B cell (primary cell): ENCODE measurements at regions of chr22 and their contacts with region 1.

Region 1: DNA sequence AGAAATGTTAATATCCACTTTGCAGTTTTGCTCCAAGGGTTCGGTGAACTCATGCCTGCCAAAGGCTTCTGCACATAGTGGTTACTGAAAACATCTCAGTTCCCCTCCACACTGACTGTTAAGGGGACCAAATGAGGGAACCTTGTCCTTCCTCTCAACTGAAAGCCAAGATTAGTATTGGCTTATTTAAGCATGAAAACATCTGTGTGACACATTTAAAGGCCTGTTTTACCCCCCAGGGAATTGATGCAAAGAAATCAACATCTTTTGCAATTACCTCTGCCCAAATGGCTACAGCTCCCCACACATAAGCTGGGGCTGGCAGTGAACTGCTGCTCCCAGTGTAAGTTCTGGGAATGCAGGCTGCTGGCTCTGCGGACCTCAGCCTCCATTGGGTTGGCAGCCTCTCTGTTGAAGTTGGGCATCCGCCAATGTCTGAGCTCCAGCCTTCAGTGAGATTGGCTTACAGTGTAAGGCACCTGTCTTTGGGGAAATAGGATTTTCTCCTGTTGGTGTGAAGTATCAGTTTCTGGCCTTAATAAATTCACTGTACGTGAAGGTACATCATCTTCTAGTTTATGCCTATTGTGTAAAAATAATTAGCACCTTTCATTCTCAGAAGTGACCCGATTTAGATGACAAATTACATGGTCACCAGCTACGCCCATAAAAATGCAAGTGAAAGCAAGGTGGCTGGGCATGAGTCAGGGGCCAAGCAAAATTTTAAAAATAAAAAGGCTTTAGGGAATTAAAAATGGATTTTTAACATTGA is 213.4 kb upstream of the SYN3 start:
- DNase-seq: peak; percentile 86
- ATAC-seq: peak; percentile 89
- H3K4me3 ChIP-seq: peak overlapping the region in 1 of 5 experiments; percentile 28
- H3K4me3 Mint-ChIP-seq: peak overlapping the region; percentile 74
- H3K27ac ChIP-seq: peak overlapping the region; percentile 84 to 91
- H3K27ac Mint-ChIP-seq: peak overlapping the region; percentile 88
- H3K4me1 ChIP-seq: peaks cover 74 to 79% of the 10 kb centered on the region in 2 donors
- H3K4me1 Mint-ChIP-seq: peaks cover 75% of the 10 kb centered on the region
- H3K27me3 ChIP-seq: no peaks in the 10 kb centered on the region
- H3K27me3 Mint-ChIP-seq: no peaks in the 10 kb centered on the region
- CTCF ChIP-seq: no peak

Region 2: GRCh38 chr22:33139937-33140336 is 131.6 kb before region 1 on chr22:
- CTCF ChIA-PET with region 1: no interaction called
- POLR2A ChIA-PET with region 1: no interaction called
- intact Hi-C with region 1: no loop called
- DNase-seq: no peak
- ATAC-seq: no peak
- H3K4me3 ChIP-seq: no peak overlapping the region
- H3K4me3 Mint-ChIP-seq: no peak overlapping the region
- H3K27ac ChIP-seq: no peak overlapping the region
- H3K27ac Mint-ChIP-seq: no peak overlapping the region
- H3K4me1 ChIP-seq: no peaks in the 10 kb centered on the region
- H3K4me1 Mint-ChIP-seq: no peaks in the 10 kb centered on the region
- H3K27me3 ChIP-seq: peaks cover 0 to 7% (median 0%) of the 10 kb centered on the region in 4 experiments
- H3K27me3 Mint-ChIP-seq: peaks cover 9% of the 10 kb centered on the region
- CTCF ChIP-seq: no peak

Region 3: GRCh38 chr22:33209930-33210784 is 61.4 kb before region 1 on chr22:
- CTCF ChIA-PET with region 1: interaction called, 38 read pairs
- POLR2A ChIA-PET with region 1: no interaction called
- intact Hi-C with region 1: loop called (anchors 5 kb)
- DNase-seq: peak; percentile 80
- ATAC-seq: peak; percentile 82
- H3K4me3 ChIP-seq: no peak overlapping the region
- H3K4me3 Mint-ChIP-seq: no peak overlapping the region
- H3K27ac ChIP-seq: no peak overlapping the region
- H3K27ac Mint-ChIP-seq: no peak overlapping the region
- H3K4me1 ChIP-seq: peaks cover 8 to 9% of the 10 kb centered on the region in 2 donors
- H3K4me1 Mint-ChIP-seq: peaks cover 16% of the 10 kb centered on the region
- H3K27me3 ChIP-seq: no peaks in the 10 kb centered on the region
- H3K27me3 Mint-ChIP-seq: peaks cover 5% of the 10 kb centered on the region
- CTCF ChIP-seq: peak; percentile 86

Region 4: GRCh38 chr22:33328789-33329296 is 57.3 kb after region 1 on chr22:
- CTCF ChIA-PET with region 1: interaction called, 3 read pairs
- POLR2A ChIA-PET with region 1: interaction called, 3 read pairs
- intact Hi-C with region 1: loop called (anchors 10 kb)
- DNase-seq: no peak
- ATAC-seq: no peak
- H3K4me3 ChIP-seq: no peak overlapping the region
- H3K4me3 Mint-ChIP-seq: no peak overlapping the region
- H3K27ac ChIP-seq: peak overlapping the region in 1 of 2 donors; percentile 29
- H3K27ac Mint-ChIP-seq: peak overlapping the region; percentile 0
- H3K4me1 ChIP-seq: peaks cover 34 to 43% of the 10 kb centered on the region in 2 donors
- H3K4me1 Mint-ChIP-seq: peaks cover 59% of the 10 kb centered on the region
- H3K27me3 ChIP-seq: no peaks in the 10 kb centered on the region
- H3K27me3 Mint-ChIP-seq: no peaks in the 10 kb centered on the region
- CTCF ChIP-seq: no peak